AG04450 (cell line): ENCODE measurements at regions of chr1 and their contacts with region 1.

Region 1: GRCh38 chr1:153566440-153567379 is 1.1 kb upstream of the S100A2 start:
- DNase-seq: peak; percentile 98
- H3K4me3 ChIP-seq: no peak overlapping the region
- H3K27ac ChIP-seq: peak overlapping the region; percentile 100
- H3K27me3 ChIP-seq: no peaks in the 10 kb centered on the region
- CTCF ChIP-seq: no peak

Region 2: DNA sequence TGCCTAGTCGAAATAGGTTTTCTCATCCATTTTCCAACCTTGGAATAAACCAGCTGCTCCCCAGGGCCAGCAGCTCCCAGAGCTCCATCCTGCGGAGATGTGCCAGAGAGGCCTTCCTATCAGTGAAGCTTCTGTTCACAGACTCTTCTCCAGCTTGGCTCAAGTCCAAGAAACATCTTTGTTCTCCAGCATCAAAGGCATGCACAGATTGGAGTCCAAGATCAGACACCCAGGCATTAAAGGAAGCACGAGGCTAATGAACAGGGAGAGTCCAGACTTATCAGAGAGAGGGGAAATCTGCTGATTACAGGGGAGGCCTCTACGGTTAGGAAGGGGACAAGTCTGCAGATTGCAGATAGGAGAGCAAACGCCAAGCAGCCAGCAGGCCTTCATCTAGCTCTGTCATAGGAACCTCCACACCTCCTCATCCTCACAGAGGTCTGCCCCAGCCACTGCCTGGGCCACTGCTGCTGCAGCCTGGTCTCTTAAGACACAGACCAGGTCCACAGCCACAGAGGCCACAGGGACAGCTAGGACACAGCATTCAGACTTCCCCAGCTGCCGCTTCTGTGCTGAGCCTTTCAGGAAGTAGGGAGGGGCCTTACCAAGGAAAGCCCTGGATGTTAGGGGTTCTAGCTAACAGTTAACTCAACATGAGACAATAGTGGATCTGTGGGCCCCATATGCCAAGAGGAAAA is 346.0 kb before region 1 on chr1:
- CTCF ChIA-PET with region 1: no interaction called
- POLR2A ChIA-PET with region 1: no interaction called
- DNase-seq: no peak
- H3K4me3 ChIP-seq: no peak overlapping the region
- H3K27ac ChIP-seq: no peak overlapping the region
- H3K27me3 ChIP-seq: no peaks in the 10 kb centered on the region
- CTCF ChIP-seq: no peak

Region 3: GRCh38 chr1:153545067-153546055 is 21.3 kb before region 1 on chr1 and contains the start of gene S100A4:
- CTCF ChIA-PET with region 1: interaction called, 20 read pairs
- POLR2A ChIA-PET with region 1: interaction called, 23 read pairs
- DNase-seq: peak; percentile 71
- H3K4me3 ChIP-seq: peak within 1 kb of the TSS; percentile 31; the same call in 1 of the 2 replicates
- H3K27ac ChIP-seq: peak within 1 kb of the TSS; percentile 80
- H3K27me3 ChIP-seq: no peaks in the 10 kb centered on the region
- CTCF ChIP-seq: no peak
- polyA plus RNA-seq, gene S100A4: 20.0 and 20.7 TPM in 2 replicates